Endothelial cell of umbilical vein (primary cell): ENCODE measurements at regions of chr5 and their contacts with region 1.

Region 1: GRCh38 chr5:39699161-39699560 is 274.4 kb upstream of the DAB2 start:
- DNase-seq: no peak
- H3K4me3 ChIP-seq: no peak overlapping the region
- H3K27ac ChIP-seq: no peak overlapping the region
- H3K4me1 ChIP-seq: no peaks in the 10 kb centered on the region
- H3K27me3 ChIP-seq: no peaks in the 10 kb centered on the region
- CTCF ChIP-seq: no peak
- POLR2A ChIP-seq: no peak

Region 2: GRCh38 chr5:39578887-39579497 is 120.2 kb before region 1 on chr5:
- CTCF ChIA-PET with region 1: no interaction called
- POLR2A ChIA-PET with region 1: no interaction called
- dilution Hi-C with region 1: no loop called
- intact Hi-C with region 1: loop called (anchors 5 kb)
- DNase-seq: peak; percentile 38
- H3K4me3 ChIP-seq: no peak overlapping the region
- H3K27ac ChIP-seq: no peak overlapping the region
- H3K4me1 ChIP-seq: peaks cover 4% of the 10 kb centered on the region
- H3K27me3 ChIP-seq: no peaks in the 10 kb centered on the region
- CTCF ChIP-seq: peak; percentile 18
- POLR2A ChIP-seq: no peak